ENCODE measurements at regions of chr6 and their contacts with region 1.

Region 1: DNA sequence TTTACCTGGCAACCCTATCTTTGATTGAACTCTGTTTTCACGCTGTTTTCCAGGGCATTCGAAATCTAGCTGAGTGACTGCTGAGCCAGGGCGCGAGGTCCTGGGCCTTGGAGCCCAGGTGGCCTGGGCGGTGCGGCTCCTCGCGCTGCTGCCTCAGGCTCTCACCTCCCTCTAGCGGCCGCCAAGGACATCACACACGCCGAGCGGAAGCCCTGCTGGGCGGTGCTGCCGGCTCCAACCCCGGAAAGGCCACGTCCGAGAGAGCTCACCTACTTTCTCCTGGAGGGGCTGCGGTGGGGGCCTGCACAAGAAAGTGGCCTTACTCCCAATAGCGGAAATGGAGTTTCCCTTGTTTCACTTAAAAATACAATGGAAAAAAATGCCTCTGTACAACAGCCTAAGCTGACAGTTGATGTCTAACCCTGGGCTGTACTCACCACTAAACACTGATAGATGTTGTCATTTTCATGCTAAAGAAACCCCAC is 77.7 kb downstream of the ELOVL4 start:
- DNase-seq: peak; percentile 65 to 73 (median 70)
- H3K4me3 ChIP-seq: no peak overlapping the region
- H3K4me3 Mint-ChIP-seq: peak overlapping the region; percentile 16 to 79 (median 70)
- H3K27ac ChIP-seq: no peak overlapping the region
- H3K27ac Mint-ChIP-seq: peak overlapping the region in 4 of 7 donors; percentile 52 to 74 (median 64)
- H3K4me1 ChIP-seq: peaks cover 3% of the 10 kb centered on the region
- H3K4me1 Mint-ChIP-seq: peaks cover 7 to 20% (median 9%) of the 10 kb centered on the region in 4 donors
- H3K27me3 ChIP-seq: no peaks in the 10 kb centered on the region
- H3K27me3 Mint-ChIP-seq: peaks cover 3 to 14% of the 10 kb centered on the region in 2 donors

Region 2: GRCh38 chr6:79570129-79571029 is 299.3 kb before region 1 on chr6:
- CTCF ChIA-PET with region 1: no interaction called
- POLR2A ChIA-PET with region 1: no interaction called
- intact Hi-C with region 1: loop called (anchors 5 kb)
- DNase-seq: peak in 4 of 5 donors; percentile 9 to 26 (median 16)
- H3K4me3 ChIP-seq: no peak overlapping the region
- H3K4me3 Mint-ChIP-seq: peak overlapping the region in 1 of 8 donors; percentile 2
- H3K27ac ChIP-seq: no peak overlapping the region
- H3K27ac Mint-ChIP-seq: no peak overlapping the region
- H3K4me1 ChIP-seq: no peaks in the 10 kb centered on the region
- H3K4me1 Mint-ChIP-seq: no peaks in the 10 kb centered on the region
- H3K27me3 ChIP-seq: no peaks in the 10 kb centered on the region
- H3K27me3 Mint-ChIP-seq: peaks cover 1 to 3% of the 10 kb centered on the region in 2 donors

Region 3: DNA sequence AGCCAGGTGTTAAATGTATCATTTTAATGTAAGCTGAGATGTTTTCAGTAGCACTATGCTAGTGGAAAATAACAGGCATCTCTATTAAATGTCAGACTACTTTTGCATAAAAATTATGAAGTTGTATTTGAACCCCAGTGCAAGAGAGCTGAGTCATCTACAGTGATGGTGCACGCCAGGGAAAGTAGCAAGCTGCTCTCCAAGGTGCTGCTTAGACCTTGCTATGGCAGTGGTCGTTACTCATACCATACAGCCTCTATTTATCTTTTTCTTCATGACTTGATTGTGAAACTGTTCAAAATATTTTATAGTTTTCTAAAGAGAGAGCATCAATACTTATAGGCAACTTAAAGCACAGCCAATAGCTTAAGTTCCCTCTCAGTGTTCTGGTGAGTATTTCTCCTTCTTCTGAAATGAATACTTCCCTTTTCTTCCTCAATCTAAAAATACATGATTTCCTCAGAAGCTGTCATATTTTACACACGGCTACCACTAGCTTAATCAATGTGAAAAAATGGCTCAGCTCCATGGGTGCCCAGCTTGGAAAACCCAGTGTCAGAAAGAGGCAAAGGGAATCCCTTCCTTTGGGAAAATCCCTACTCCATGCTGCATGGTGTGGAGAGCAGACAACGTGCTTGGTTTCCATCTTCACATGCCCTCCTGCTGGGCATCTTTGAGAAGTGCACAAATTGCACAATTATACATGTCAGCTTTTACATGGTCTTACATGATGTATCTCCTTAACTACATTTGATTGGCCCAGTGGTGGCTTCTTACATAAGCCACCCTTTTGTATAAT is 27.9 kb before region 1 on chr6:
- CTCF ChIA-PET with region 1: interaction called, 13 read pairs
- POLR2A ChIA-PET with region 1: no interaction called
- intact Hi-C with region 1: no loop called
- DNase-seq: no peak
- H3K4me3 ChIP-seq: no peak overlapping the region
- H3K4me3 Mint-ChIP-seq: no peak overlapping the region
- H3K27ac ChIP-seq: no peak overlapping the region
- H3K27ac Mint-ChIP-seq: no peak overlapping the region
- H3K4me1 ChIP-seq: no peaks in the 10 kb centered on the region
- H3K4me1 Mint-ChIP-seq: no peaks in the 10 kb centered on the region
- H3K27me3 ChIP-seq: no peaks in the 10 kb centered on the region
- H3K27me3 Mint-ChIP-seq: peaks cover 7 to 10% of the 10 kb centered on the region in 2 donors

Region 4: DNA sequence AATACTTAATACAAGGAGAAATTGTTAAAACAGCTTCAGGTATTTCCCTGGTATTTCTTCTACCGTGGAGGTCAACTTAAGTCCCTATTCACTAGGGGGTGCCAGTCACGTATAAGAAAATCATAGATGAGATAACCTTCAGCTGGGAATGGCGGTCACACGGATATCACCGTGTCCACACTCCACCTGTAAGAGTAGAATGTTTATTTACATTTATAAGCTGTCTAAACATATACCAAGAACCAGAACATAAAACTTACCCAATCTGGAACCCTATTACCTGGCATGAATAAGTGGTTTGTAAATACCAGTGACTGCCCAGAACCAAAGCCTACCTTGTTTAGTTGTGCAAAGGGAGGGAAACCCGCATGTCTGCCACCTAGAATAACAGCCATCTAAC is 79.6 kb after region 1 on chr6:
- CTCF ChIA-PET with region 1: interaction called, 8 read pairs
- POLR2A ChIA-PET with region 1: interaction called, 3 read pairs
- intact Hi-C with region 1: loop called (anchors 2 kb)
- DNase-seq: peak; percentile 54 to 69 (median 63)
- H3K4me3 ChIP-seq: no peak overlapping the region
- H3K4me3 Mint-ChIP-seq: peak overlapping the region in 5 of 8 donors; percentile 12 to 64 (median 30)
- H3K27ac ChIP-seq: no peak overlapping the region
- H3K27ac Mint-ChIP-seq: peak overlapping the region in 4 of 7 donors; percentile 43 to 86 (median 60)
- H3K4me1 ChIP-seq: peaks cover 36% of the 10 kb centered on the region
- H3K4me1 Mint-ChIP-seq: peaks cover 17 to 38% (median 21%) of the 10 kb centered on the region in 4 donors
- H3K27me3 ChIP-seq: peaks cover 12% of the 10 kb centered on the region
- H3K27me3 Mint-ChIP-seq: peaks cover 12 to 20% of the 10 kb centered on the region in 2 donors

Region 5: GRCh38 chr6:80094017-80094416 is 224.4 kb after region 1 on chr6:
- CTCF ChIA-PET with region 1: interaction called, 17 read pairs
- POLR2A ChIA-PET with region 1: no interaction called
- intact Hi-C with region 1: loop called (anchors 1 kb)
- DNase-seq: peak in 4 of 5 donors; percentile 33 to 46 (median 38)
- H3K4me3 ChIP-seq: no peak overlapping the region
- H3K4me3 Mint-ChIP-seq: no peak overlapping the region
- H3K27ac ChIP-seq: no peak overlapping the region
- H3K27ac Mint-ChIP-seq: no peak overlapping the region
- H3K4me1 ChIP-seq: no peaks in the 10 kb centered on the region
- H3K4me1 Mint-ChIP-seq: peaks cover 0 to 5% (median 0%) of the 10 kb centered on the region in 4 donors
- H3K27me3 ChIP-seq: no peaks in the 10 kb centered on the region
- H3K27me3 Mint-ChIP-seq: peaks cover under 1 to 7% of the 10 kb centered on the region in 2 donors

Region 6: GRCh38 chr6:81752138-81752920 is 1882.7 kb after region 1 on chr6 and contains the start of gene TENT5A:
- CTCF ChIA-PET with region 1: interaction called, 4 read pairs
- POLR2A ChIA-PET with region 1: no interaction called
- intact Hi-C with region 1: loop called (anchors 5 kb)
- DNase-seq: peak; percentile 82 to 89 (median 84)
- H3K4me3 ChIP-seq: peak within 1 kb of the TSS; percentile 76 to 81
- H3K4me3 Mint-ChIP-seq: peak within 1 kb of the TSS; percentile 94 to 98 (median 96)
- H3K27ac ChIP-seq: peak within 1 kb of the TSS; percentile 66
- H3K27ac Mint-ChIP-seq: peak within 1 kb of the TSS; percentile 89 to 96 (median 94)
- H3K4me1 ChIP-seq: peaks cover 19% of the 10 kb centered on the region
- H3K4me1 Mint-ChIP-seq: peaks cover 18 to 49% (median 33%) of the 10 kb centered on the region in 4 donors
- H3K27me3 ChIP-seq: no peaks in the 10 kb centered on the region
- H3K27me3 Mint-ChIP-seq: peaks cover 5 to 11% of the 10 kb centered on the region in 2 donors
- total RNA-seq, gene TENT5A: 5.8 to 6.6 TPM